ENCODE measurements at regions of chr1 and their contacts with region 1.

Region 1: GRCh38 chr1:209368864-209369598 is 214.5 kb upstream of the CAMK1G start:
- DNase-seq: peak; percentile 90
- H3K4me3 ChIP-seq: no peak overlapping the region
- H3K27ac ChIP-seq: peak overlapping the region; percentile 75
- H3K4me1 ChIP-seq: peaks cover 86% of the 10 kb centered on the region
- H3K27me3 ChIP-seq: no peaks in the 10 kb centered on the region
- CTCF ChIP-seq: no peak

Region 2: DNA sequence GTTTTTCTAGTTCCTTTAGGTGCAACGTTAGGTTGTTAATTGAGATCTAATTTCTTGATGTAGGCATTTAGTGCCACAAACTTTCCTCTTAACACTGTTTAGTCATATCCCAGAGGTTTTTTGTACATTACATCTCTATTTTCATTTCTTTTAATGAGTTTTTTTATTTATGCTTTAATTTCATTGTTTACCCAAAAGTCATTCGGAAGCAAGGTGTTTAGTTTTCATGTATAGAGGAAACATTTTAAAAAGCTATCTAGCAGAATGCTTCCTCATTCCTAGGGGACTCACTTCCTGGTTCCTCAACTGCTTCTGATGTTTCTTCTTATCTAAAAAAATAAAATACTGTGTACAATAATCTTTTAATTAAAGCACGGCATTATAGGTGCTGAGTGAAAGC is 92.7 kb before region 1 on chr1:
- CTCF ChIA-PET with region 1: no interaction called
- dilution Hi-C with region 1: no loop called
- in situ Hi-C with region 1: no loop called
- intact Hi-C with region 1: no loop called
- DNase-seq: no peak
- H3K4me3 ChIP-seq: no peak overlapping the region
- H3K27ac ChIP-seq: no peak overlapping the region
- H3K4me1 ChIP-seq: no peaks in the 10 kb centered on the region
- H3K27me3 ChIP-seq: no peaks in the 10 kb centered on the region
- CTCF ChIP-seq: no peak

Region 3: DNA sequence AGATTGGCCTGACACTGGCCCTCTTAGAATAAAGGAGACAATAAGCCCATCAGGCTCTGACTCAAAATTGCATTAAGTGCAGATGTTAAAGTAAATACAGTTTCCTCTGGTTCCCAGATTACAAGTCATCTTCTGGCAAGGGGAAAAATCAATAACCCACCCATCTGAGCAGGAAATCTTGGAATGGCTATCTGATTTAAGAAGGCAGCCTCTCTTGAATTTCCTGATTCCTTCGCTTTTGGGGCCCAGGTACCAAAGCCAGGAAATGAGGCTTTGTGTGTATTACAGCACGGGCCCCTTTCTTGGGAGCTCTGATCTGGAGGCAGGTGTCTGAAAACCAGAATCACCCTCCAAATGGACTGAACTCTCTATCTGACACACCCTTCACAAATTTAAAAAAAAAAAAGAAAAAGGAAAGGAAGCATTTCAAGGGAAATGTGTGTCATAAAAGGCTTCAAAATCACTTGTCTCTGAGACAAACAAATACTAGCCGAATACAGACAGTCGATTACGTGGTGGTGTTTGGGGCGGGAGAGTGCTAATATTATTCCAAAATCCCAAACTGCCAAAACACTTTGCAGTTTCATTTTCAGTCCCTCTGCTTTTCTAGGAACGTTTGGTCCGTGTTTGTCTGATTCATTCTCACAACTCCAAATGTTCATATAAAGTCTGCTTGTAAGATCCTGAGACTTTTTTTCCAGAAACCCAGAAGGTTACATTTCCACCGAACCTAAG is 26.4 kb before region 1 on chr1:
- CTCF ChIA-PET with region 1: no interaction called
- dilution Hi-C with region 1: no loop called
- in situ Hi-C with region 1: no loop called
- intact Hi-C with region 1: no loop called
- DNase-seq: no peak
- H3K4me3 ChIP-seq: no peak overlapping the region
- H3K27ac ChIP-seq: no peak overlapping the region
- H3K4me1 ChIP-seq: no peaks in the 10 kb centered on the region
- H3K27me3 ChIP-seq: no peaks in the 10 kb centered on the region
- CTCF ChIP-seq: no peak

Region 4: GRCh38 chr1:209383907-209384709 is 15.1 kb after region 1 on chr1:
- CTCF ChIA-PET with region 1: no interaction called
- dilution Hi-C with region 1: no loop called
- in situ Hi-C with region 1: no loop called
- intact Hi-C with region 1: loop called (anchors 1 kb)
- DNase-seq: peak; percentile 84
- H3K4me3 ChIP-seq: peak overlapping the region; percentile 5 to 27 (median 11)
- H3K27ac ChIP-seq: peak overlapping the region; percentile 98
- H3K4me1 ChIP-seq: peaks cover 77% of the 10 kb centered on the region
- H3K27me3 ChIP-seq: no peaks in the 10 kb centered on the region
- CTCF ChIP-seq: no peak

Region 5: GRCh38 chr1:209389258-209389657 is 20.2 kb after region 1 on chr1:
- CTCF ChIA-PET with region 1: no interaction called
- dilution Hi-C with region 1: no loop called
- in situ Hi-C with region 1: no loop called
- intact Hi-C with region 1: loop called (anchors 1 kb)
- DNase-seq: peak; percentile 98
- H3K4me3 ChIP-seq: no peak overlapping the region
- H3K27ac ChIP-seq: peak overlapping the region; percentile 98
- H3K4me1 ChIP-seq: peaks cover 64% of the 10 kb centered on the region
- H3K27me3 ChIP-seq: no peaks in the 10 kb centered on the region
- CTCF ChIP-seq: no peak

Region 6: DNA sequence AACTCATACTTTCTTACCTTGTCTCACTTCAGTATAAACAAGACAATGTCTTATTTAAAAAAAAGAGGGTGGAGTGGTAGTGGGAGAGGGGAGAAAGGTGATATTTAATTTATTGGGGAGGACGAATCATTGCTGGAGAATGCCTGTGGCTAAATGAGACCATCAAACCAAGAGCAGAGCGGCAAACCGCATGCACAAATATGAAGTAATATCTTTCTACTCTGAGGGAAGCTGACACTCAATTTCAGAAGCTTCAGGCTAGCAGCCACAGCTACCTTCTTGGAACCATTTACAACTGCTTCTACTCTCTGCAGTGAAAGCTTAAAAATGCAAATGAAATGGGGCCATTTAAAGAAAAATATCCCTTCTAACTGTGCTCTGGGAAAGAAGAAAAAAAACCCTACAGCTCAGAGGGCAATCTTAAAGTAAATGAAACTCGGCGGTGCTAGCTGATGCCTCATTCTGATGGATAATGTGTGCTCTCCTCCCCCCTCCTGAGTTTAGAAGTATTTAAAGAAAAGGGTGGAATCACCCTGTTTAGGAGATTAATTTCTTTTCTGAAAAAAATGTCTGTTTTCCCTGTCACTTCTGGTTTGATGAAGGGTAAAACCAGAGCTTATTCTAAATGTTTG is 36.3 kb after region 1 on chr1:
- CTCF ChIA-PET with region 1: no interaction called
- dilution Hi-C with region 1: no loop called
- in situ Hi-C with region 1: no loop called
- intact Hi-C with region 1: loop called (anchors 2 kb)
- DNase-seq: peak; percentile 83
- H3K4me3 ChIP-seq: peak overlapping the region in 2 of 3 experiments; percentile 16 to 18
- H3K27ac ChIP-seq: peak overlapping the region; percentile 98
- H3K4me1 ChIP-seq: peaks cover 70% of the 10 kb centered on the region
- H3K27me3 ChIP-seq: no peaks in the 10 kb centered on the region
- CTCF ChIP-seq: no peak

Region 7: GRCh38 chr1:209411491-209411929 is 42.5 kb after region 1 on chr1:
- CTCF ChIA-PET with region 1: interaction called, 4 read pairs
- dilution Hi-C with region 1: no loop called
- in situ Hi-C with region 1: no loop called
- intact Hi-C with region 1: loop called (anchors 1 kb)
- DNase-seq: peak; percentile 97
- H3K4me3 ChIP-seq: peak overlapping the region in 1 of 3 experiments; percentile 12
- H3K27ac ChIP-seq: peak overlapping the region; percentile 100
- H3K4me1 ChIP-seq: peaks cover 78% of the 10 kb centered on the region
- H3K27me3 ChIP-seq: no peaks in the 10 kb centered on the region
- CTCF ChIP-seq: no peak